ENCODE measurements at regions of chr1 and their contacts with region 1.

Region 1: GRCh38 chr1:204431310-204432165 is 19.9 kb upstream of the PPP1R15B start:
- DNase-seq: peak; percentile 86
- ATAC-seq: peak; percentile 49

Region 2: GRCh38 chr1:204266504-204267034 is 165.0 kb before region 1 on chr1:
- intact Hi-C with region 1: no loop called
- DNase-seq: no peak
- ATAC-seq: no peak

Region 3: GRCh38 chr1:204506961-204507387 is 75.4 kb after region 1 on chr1:
- intact Hi-C with region 1: loop called (anchors 2 kb)
- DNase-seq: no peak
- ATAC-seq: peak; percentile 84

Measured in Right ventricle myocardium inferior (tissue), 1 donor.